Activated CD8-positive, alpha-beta T cell treated with anti-CD3 and anti-CD28 coated beads, Interleukin-2, amount 10 ng/mL, durations not matched to agents 7 days and 5 days (primary cell): ENCODE measurements at regions of chr17 and their contacts with region 1.

Region 1: GRCh38 chr17:7989781-7990655 is 12.4 kb upstream of the GUCY2D start:
- DNase-seq: peak; percentile 93
- ATAC-seq: peak; percentile 91
- H3K4me3 Mint-ChIP-seq: peak overlapping the region; percentile 77
- H3K27ac Mint-ChIP-seq: peak overlapping the region; percentile 88
- H3K4me1 Mint-ChIP-seq: peaks cover 35% of the 10 kb centered on the region
- H3K27me3 Mint-ChIP-seq: peaks cover 16% of the 10 kb centered on the region

Region 2: DNA sequence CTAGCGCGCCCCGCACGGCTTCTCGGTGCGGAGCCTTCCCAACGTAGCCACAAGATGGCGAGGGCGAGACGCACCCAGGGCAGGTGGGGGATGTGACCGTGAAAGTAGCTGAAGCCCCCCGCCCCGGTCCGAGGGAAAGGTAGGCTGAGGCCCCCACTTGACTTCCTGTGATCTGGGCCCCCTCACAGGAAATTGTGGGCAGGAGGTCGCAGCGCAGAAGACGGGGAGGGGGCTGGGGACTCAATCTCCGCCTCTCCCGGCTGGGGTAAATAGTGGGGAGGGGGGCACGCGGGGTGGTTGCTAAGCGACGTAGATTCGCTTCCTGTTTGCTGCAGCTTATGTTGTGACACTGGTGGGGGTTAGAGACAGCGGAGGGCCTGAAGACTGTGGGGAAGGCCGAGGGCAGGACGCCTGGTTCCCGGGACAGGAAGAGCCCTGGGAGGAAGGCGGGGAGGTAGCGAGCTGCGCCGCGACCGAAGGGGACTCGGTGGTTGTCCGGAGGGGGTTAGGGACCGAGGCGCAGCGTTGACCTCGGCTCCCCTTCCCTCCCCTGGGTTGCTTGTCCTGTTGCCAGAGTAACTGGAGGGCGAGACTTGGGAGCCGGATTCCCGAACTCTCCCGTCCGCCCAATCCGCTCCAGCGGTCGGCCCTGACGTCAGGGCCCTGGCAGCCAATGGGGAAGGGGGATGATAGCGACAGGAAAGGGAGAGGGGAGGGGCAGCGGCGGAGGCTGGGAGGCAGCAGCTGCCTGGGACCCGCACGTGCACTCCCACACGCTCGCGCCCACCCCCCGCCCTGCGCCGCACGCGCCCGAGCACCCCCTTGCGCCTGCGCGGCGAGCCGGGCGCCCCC is 154.8 kb before region 1 on chr17:
- CTCF ChIA-PET with region 1: interaction called, 12 read pairs
- POLR2A ChIA-PET with region 1: no interaction called
- DNase-seq: peak; percentile 91
- ATAC-seq: peak; percentile 56
- H3K4me3 Mint-ChIP-seq: peak overlapping the region; percentile 90
- H3K27ac Mint-ChIP-seq: peak overlapping the region; percentile 94
- H3K4me1 Mint-ChIP-seq: peaks cover 55% of the 10 kb centered on the region
- H3K27me3 Mint-ChIP-seq: peaks cover 8% of the 10 kb centered on the region

Region 3: GRCh38 chr17:7915611-7916382 is 74.2 kb before region 1 on chr17 and contains the start of gene RNF227:
- CTCF ChIA-PET with region 1: interaction called, 237 read pairs
- POLR2A ChIA-PET with region 1: interaction called, 9 read pairs
- DNase-seq: peak; percentile 89
- ATAC-seq: peak; percentile 85
- H3K4me3 Mint-ChIP-seq: peak within 1 kb of the TSS; percentile 85
- H3K27ac Mint-ChIP-seq: peak within 1 kb of the TSS; percentile 95
- H3K4me1 Mint-ChIP-seq: peaks cover 35% of the 10 kb centered on the region
- H3K27me3 Mint-ChIP-seq: no peaks in the 10 kb centered on the region
- total RNA-seq, gene RNF227: 4.2 TPM

Region 4: DNA sequence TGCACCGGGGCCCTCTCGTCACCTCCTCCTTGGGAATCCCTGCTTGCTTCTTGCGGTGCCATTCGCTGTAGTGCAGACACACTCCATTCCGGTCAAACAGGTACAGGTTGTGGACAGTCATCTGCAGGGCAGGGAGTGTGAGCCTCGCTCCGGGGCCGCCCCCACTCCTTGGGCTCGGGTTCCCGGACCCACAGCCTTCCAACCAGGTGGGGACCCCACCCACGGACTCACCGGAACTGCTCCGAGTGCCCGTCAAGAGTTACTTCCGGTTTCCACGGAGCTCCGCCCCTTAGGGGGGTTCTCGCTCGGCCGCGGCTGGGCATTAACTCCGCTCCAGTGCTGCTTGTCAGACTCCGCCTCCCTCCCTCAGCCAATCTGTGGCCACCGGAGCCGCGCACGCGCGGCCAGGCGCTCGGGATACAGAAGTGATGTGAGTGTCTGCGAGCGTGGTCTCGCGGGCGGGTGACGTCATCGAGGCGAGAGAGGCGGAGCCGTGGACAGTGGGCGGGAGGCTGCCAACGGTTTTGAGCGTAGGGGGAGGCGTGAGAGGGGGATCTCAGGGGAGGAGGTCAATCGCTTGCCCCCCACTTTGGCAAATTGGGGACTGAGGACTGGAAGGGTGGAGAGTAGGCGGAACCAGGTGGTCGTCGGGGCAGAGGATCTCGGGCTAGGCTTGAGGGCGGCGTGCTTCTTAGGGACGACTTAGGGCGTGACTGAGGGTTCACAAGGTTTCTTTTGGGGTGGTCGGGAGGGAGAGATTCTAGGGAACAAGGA is 58.1 kb before region 1 on chr17 and contains the starts of genes CNTROB and TRAPPC1:
- CTCF ChIA-PET with region 1: interaction called, 128 read pairs
- POLR2A ChIA-PET with region 1: interaction called, 5 read pairs
- DNase-seq: peak; percentile 100
- ATAC-seq: peak; percentile 98
- H3K4me3 Mint-ChIP-seq: peak within 1 kb of the TSS; percentile 95
- H3K27ac Mint-ChIP-seq: peak within 1 kb of the TSS; percentile 98
- H3K4me1 Mint-ChIP-seq: peaks cover 49% of the 10 kb centered on the region
- H3K27me3 Mint-ChIP-seq: no peaks in the 10 kb centered on the region
- total RNA-seq, gene CNTROB: 66.7 to 76.5 TPM
- total RNA-seq, gene TRAPPC1: 248 to 278 TPM

Region 5: DNA sequence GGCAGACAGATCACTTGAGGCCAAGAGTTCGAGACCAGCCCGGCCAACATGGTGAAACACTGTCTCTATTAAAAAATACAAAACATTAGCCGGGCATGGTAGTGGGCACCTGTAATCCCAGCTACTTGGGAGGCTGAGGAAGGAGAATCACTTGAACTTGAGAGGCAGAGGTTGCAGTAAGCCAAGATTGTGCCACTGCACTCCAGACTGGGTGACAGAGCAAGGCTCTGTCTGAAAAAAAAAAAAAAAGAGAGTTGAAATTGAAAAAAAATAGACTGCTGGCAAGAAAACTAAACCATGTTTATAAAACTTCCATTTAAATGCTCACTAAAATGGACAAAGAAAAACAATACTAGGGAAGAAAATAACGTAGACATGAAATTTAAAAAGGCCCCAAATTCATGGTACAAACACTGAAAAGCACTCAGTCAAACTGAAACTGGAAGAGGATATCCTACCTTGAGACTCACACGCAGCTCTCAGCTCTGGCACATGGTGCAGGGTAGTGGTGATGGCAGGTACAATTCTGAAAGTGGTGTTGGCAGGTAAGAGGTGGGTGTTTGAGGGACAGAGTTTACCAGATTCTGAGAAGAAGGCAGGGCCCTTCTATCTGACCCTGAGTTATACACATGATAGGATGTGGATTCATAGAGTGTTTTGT is 38.7 kb before region 1 on chr17:
- CTCF ChIA-PET with region 1: interaction called, 35 read pairs
- POLR2A ChIA-PET with region 1: no interaction called
- DNase-seq: peak; percentile 73
- ATAC-seq: peak; percentile 98
- H3K4me3 Mint-ChIP-seq: peak overlapping the region; percentile 66
- H3K27ac Mint-ChIP-seq: peak overlapping the region; percentile 94
- H3K4me1 Mint-ChIP-seq: peaks cover 40% of the 10 kb centered on the region
- H3K27me3 Mint-ChIP-seq: no peaks in the 10 kb centered on the region

Region 6: DNA sequence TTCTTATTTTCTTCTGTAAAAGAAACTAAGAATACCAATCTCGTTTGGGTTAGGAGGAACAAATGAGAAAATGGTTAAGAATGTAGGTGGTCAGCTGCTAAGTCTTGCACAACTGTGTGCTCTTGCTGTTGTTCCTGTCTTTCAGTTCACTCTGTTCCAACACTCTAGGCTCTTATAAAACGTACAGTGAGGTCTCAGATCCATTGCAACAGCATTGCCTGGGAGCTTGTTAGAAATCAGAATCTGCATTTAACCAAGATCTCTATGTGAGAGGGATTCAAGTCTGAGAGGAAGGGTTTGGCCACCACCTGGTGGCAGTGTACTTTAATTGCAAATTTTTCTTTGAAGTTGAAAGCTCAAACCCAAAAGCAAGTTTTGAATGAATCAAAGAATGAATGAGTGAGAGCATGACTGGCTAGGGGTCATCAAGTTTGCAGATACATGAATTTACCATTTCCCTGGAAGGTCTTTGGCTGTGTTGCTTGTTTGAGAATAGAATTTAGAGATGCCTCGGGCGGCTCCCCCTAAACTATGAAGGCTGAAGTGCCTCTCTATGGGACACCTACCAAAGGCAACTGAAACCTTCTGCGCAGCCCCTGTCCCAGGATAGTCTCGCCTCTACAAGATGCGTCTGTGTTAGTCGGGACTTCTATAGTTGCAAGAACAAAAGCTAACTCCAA is 51.4 kb after region 1 on chr17:
- CTCF ChIA-PET with region 1: interaction called, 20 read pairs
- POLR2A ChIA-PET with region 1: no interaction called
- DNase-seq: peak; percentile 69
- ATAC-seq: no peak
- H3K4me3 Mint-ChIP-seq: no peak overlapping the region
- H3K27ac Mint-ChIP-seq: no peak overlapping the region
- H3K4me1 Mint-ChIP-seq: peaks cover 3% of the 10 kb centered on the region
- H3K27me3 Mint-ChIP-seq: peaks cover 35% of the 10 kb centered on the region